PC-9 (cell line): ENCODE measurements at regions of chr19 and their contacts with region 1.

Region 1: GRCh38 chr19:14479975-14480699 is 5.0 kb upstream of the PTGER1 start:
- DNase-seq: peak in 1 of 2 experiments; percentile 47
- H3K4me3 ChIP-seq: no peak overlapping the region
- H3K27ac ChIP-seq: no peak overlapping the region
- H3K4me1 ChIP-seq: peaks cover 30% of the 10 kb centered on the region
- H3K27me3 ChIP-seq: no peaks in the 10 kb centered on the region
- CTCF ChIP-seq: peak; percentile 94

Region 2: DNA sequence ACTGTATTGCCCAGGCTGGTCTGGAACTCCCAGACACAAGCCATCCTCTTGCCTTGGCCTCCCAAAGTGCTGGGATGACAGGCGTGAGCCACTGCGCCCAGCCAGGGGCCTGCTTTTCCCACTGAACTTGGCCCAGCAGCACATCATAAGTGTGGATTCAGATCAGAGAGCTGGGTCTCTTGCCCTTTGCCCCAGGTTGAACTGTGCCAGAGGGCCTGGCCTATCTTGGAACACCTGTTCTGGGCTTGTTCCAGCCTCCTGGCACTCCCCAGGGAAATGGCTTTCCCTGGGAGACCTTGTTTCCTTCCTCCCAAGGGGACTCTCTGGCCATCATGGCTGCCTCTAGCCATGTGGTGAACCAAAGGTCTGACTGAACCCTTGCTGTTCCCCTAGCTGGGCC is 570.7 kb before region 1 on chr19:
- CTCF ChIA-PET with region 1: interaction called, 16 read pairs
- POLR2A ChIA-PET with region 1: no interaction called
- intact Hi-C with region 1: no loop called
- DNase-seq: no peak
- H3K4me3 ChIP-seq: no peak overlapping the region
- H3K27ac ChIP-seq: no peak overlapping the region
- H3K4me1 ChIP-seq: peaks cover 11% of the 10 kb centered on the region; the same call in 1 of the 2 replicates
- H3K27me3 ChIP-seq: no peaks in the 10 kb centered on the region
- CTCF ChIP-seq: no peak